ENCODE measurements at regions of chr19 and their contacts with region 1.

Region 1: GRCh38 chr19:20247016-20247683 is 80.1 kb downstream of the ZNF486 start:
- DNase-seq: peak in 7 of 9 experiments; percentile 5 to 54 (median 35)
- ATAC-seq: no peak
- H3K4me3 ChIP-seq: no peak overlapping the region
- H3K4me3 Mint-ChIP-seq: no peak overlapping the region
- H3K27ac ChIP-seq: no peak overlapping the region
- H3K27ac Mint-ChIP-seq: no peak overlapping the region
- H3K4me1 ChIP-seq: no peaks in the 10 kb centered on the region
- H3K4me1 Mint-ChIP-seq: no peaks in the 10 kb centered on the region
- H3K27me3 ChIP-seq: no peaks in the 10 kb centered on the region
- H3K27me3 Mint-ChIP-seq: no peaks in the 10 kb centered on the region
- CTCF ChIP-seq: peak; percentile 37

Region 2: GRCh38 chr19:20470345-20471134 is 223.4 kb after region 1 on chr19:
- CTCF ChIA-PET with region 1: no interaction called
- POLR2A ChIA-PET with region 1: no interaction called
- intact Hi-C with region 1: no loop called
- DNase-seq: no peak
- ATAC-seq: no peak
- H3K4me3 ChIP-seq: no peak overlapping the region
- H3K4me3 Mint-ChIP-seq: no peak overlapping the region
- H3K27ac ChIP-seq: no peak overlapping the region
- H3K27ac Mint-ChIP-seq: no peak overlapping the region
- H3K4me1 ChIP-seq: no peaks in the 10 kb centered on the region
- H3K4me1 Mint-ChIP-seq: no peaks in the 10 kb centered on the region
- H3K27me3 ChIP-seq: no peaks in the 10 kb centered on the region
- H3K27me3 Mint-ChIP-seq: no peaks in the 10 kb centered on the region
- CTCF ChIP-seq: no peak

Region 3: GRCh38 chr19:21698215-21698614 is 1451.1 kb after region 1 on chr19:
- CTCF ChIA-PET with region 1: interaction called, 4 read pairs
- POLR2A ChIA-PET with region 1: no interaction called
- intact Hi-C with region 1: loop called in 1 of 2 experiments (anchors 2 kb)
- DNase-seq: peak in 2 of 9 experiments; percentile 34 to 61
- ATAC-seq: peak; percentile 57
- H3K4me3 ChIP-seq: no peak overlapping the region
- H3K4me3 Mint-ChIP-seq: no peak overlapping the region
- H3K27ac ChIP-seq: no peak overlapping the region
- H3K27ac Mint-ChIP-seq: no peak overlapping the region
- H3K4me1 ChIP-seq: no peaks in the 10 kb centered on the region
- H3K4me1 Mint-ChIP-seq: no peaks in the 10 kb centered on the region
- H3K27me3 ChIP-seq: no peaks in the 10 kb centered on the region
- H3K27me3 Mint-ChIP-seq: no peaks in the 10 kb centered on the region
- CTCF ChIP-seq: peak; percentile 78

Region 4: GRCh38 chr19:21891081-21891480 is 1643.9 kb after region 1 on chr19:
- CTCF ChIA-PET with region 1: no interaction called
- POLR2A ChIA-PET with region 1: no interaction called
- intact Hi-C with region 1: loop called in 1 of 2 experiments (anchors 5 kb)
- DNase-seq: no peak
- ATAC-seq: no peak
- H3K4me3 ChIP-seq: no peak overlapping the region
- H3K4me3 Mint-ChIP-seq: no peak overlapping the region
- H3K27ac ChIP-seq: no peak overlapping the region
- H3K27ac Mint-ChIP-seq: no peak overlapping the region
- H3K4me1 ChIP-seq: no peaks in the 10 kb centered on the region
- H3K4me1 Mint-ChIP-seq: no peaks in the 10 kb centered on the region
- H3K27me3 ChIP-seq: no peaks in the 10 kb centered on the region
- H3K27me3 Mint-ChIP-seq: no peaks in the 10 kb centered on the region
- CTCF ChIP-seq: no peak

Measured in CD8-positive, alpha-beta T cell (primary cell).